ENCODE measurements at regions of chr12 and their contacts with region 1.

Region 1: DNA sequence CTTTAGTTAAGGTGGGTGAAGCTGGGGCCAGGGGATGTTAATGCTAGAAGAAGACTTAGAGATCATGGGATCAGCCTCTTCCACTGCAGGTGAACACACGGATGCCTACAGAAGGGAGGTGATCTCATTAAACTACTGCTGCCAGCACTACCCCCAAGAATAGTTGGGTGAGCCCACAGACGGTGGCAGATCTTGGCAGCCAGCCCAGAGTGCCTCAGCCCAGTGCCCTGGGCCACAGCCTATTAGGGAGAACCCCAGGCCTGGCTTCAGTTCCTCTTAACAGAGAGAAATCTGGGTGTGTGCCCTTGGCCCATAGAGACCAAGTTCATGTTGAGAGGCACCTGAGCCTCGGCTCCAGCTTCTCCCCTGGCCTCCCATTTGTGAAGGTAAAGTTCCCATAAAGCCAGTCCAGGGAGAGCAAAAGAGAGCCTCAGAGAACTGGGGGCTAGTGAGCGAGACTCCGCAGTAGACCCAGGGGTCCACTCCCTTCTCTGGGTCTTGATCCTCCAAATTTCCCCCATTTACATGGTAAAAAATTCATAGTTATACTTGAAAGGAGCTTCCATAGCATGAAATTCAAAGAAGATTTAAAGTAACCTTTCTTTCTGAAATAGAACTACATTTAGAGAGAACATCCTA is 125.0 kb upstream of the CCND2 start:
- DNase-seq: peak; percentile 29 to 75 (median 51)
- ATAC-seq: peak; percentile 65
- H3K4me3 ChIP-seq: no peak overlapping the region
- H3K4me3 Mint-ChIP-seq: no peak overlapping the region
- H3K27ac ChIP-seq: no peak overlapping the region
- H3K27ac Mint-ChIP-seq: no peak overlapping the region
- H3K4me1 ChIP-seq: peaks cover 20% of the 10 kb centered on the region
- H3K4me1 Mint-ChIP-seq: peaks cover 36% of the 10 kb centered on the region
- H3K27me3 ChIP-seq: no peaks in the 10 kb centered on the region
- H3K27me3 Mint-ChIP-seq: no peaks in the 10 kb centered on the region
- CTCF ChIP-seq: no peak

Region 2: DNA sequence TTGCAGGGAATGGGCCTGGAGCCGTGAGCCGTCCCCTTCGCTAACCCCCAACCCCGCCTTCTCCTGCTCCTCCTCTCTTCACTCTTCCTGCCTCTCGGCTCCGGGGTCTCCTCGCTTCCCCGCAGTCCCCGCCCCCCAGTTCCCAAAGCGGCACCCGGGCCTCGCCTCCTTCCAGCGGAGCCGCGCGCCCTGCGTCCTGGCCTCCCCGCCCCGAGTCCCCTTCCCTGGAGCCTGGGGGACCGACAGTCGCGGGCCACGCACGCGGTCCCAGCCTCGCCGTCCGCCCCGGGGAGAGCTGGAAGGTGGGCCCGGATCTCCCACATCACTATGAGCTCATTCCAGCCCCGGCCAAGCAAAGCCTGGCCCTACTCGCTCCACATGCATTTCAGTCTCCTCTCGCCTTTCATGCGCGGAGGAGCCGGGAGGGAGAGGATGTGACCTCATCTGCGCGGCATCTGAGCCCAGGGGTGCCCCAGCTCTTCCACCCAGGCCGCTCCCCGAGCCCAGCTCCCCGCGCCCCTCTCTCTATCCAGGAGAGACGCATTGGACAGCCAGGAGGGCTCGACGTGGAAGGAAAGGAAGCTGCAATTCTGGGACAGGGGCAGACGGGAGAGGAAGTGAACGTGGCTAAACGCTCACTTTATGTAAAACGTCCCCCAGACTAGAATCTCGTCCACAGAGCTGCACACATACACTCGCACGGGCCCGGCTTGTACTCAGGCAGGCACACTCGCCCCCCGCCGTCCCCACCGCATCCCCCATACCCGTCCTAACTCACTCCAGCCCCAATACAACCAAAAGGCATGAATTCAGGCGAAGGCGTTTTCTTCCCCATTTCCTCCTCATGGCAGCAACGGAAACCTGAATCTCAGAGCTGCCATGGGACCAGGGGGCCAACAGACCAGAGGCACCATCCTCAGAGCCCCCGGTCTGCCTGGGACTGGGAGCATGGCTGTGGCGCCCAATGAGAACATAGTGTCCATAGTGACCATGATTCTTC is 16.3 kb after region 1 on chr12:
- CTCF ChIA-PET with region 1: interaction called, 9 read pairs
- POLR2A ChIA-PET with region 1: interaction called, 11 read pairs
- intact Hi-C with region 1: loop called in 1 of 2 experiments (anchors 2 kb)
- DNase-seq: peak; percentile 34 to 75 (median 56)
- ATAC-seq: peak; percentile 93
- H3K4me3 ChIP-seq: peak overlapping the region; percentile 63 to 76
- H3K4me3 Mint-ChIP-seq: peak overlapping the region; percentile 91
- H3K27ac ChIP-seq: peak overlapping the region; percentile 59 to 70
- H3K27ac Mint-ChIP-seq: peak overlapping the region; percentile 92
- H3K4me1 ChIP-seq: peaks cover 9% of the 10 kb centered on the region
- H3K4me1 Mint-ChIP-seq: peaks cover 14% of the 10 kb centered on the region
- H3K27me3 ChIP-seq: no peaks in the 10 kb centered on the region
- H3K27me3 Mint-ChIP-seq: no peaks in the 10 kb centered on the region
- CTCF ChIP-seq: no peak